Heart left ventricle (tissue), 16 donors: ENCODE measurements at regions of chr9 and their contacts with region 1.

Region 1: GRCh38 chr9:135117281-135117680 is 29.8 kb downstream of the OLFM1 start:
- DNase-seq: no peak
- ATAC-seq: no peak
- H3K4me3 ChIP-seq: no peak overlapping the region
- H3K27ac ChIP-seq: no peak overlapping the region
- H3K4me1 ChIP-seq: no peaks in the 10 kb centered on the region
- H3K27me3 ChIP-seq: peaks cover 0 to 2% (median 0%) of the 10 kb centered on the region in 9 donors
- CTCF ChIP-seq: no peak
- POLR2A ChIP-seq: no peak

Region 2: GRCh38 chr9:135178498-135178897 is 61.2 kb after region 1 on chr9:
- intact Hi-C with region 1: loop called in 1 of 10 experiments (anchors 10 kb)
- DNase-seq: no peak
- ATAC-seq: no peak
- H3K4me3 ChIP-seq: no peak overlapping the region
- H3K27ac ChIP-seq: no peak overlapping the region
- H3K4me1 ChIP-seq: no peaks in the 10 kb centered on the region
- H3K27me3 ChIP-seq: peaks cover 0 to 59% (median 4%) of the 10 kb centered on the region in 9 donors
- CTCF ChIP-seq: no peak
- POLR2A ChIP-seq: no peak